Activated naive CD4-positive, alpha-beta T cell treated with anti-CD3 and anti-CD28 coated beads for 36 hours (primary cell): ENCODE measurements at regions of chr5 and their contacts with region 1.

Region 1: DNA sequence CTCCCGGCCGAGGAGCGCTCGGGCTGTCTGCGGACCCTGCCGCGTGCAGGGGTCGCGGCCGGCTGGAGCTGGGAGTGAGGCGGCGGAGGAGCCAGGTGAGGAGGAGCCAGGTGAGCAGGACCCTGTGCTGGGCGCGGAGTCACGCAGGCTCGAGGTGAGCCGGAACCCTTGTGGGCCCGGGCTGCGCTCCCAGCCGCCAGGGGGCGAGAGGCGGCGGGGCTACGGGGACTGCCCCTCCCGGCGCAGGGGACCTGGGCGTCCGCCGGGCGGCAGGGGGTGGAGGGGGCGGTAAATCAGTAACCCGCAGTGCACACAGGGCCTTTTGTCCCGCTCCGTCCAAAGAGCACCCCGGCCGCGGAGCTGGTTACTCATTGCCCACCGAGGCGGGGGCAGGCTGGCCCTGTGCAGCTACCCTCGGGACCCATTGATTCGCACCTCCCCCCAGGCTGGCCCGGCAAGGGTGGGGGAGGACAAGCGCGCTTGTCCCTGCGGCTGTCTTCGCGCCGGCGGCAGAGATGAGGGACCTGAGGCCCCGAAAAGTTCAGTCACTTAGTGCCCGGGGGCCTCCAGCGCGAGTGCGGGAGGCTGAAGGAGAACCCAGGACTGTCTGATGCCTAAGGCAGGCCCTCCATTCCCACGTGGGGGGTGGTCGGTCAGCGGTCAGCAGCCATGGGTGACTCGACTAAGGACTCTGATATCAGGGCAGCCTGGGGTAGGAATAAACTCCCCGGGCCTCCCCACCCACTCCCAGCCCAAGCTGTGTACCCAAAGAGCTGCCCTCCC is 400 bp downstream of the FGFR4 start:
- DNase-seq: peak; percentile 63
- H3K4me3 Mint-ChIP-seq: peak overlapping the region; percentile 33
- H3K27ac Mint-ChIP-seq: no peak overlapping the region
- H3K4me1 Mint-ChIP-seq: peaks cover 4% of the 10 kb centered on the region
- H3K27me3 Mint-ChIP-seq: peaks cover 5% of the 10 kb centered on the region

Region 2: GRCh38 chr5:177006265-177006972 is 80.7 kb before region 1 on chr5 and contains the start of gene UIMC1:
- CTCF ChIA-PET with region 1: no interaction called
- intact Hi-C with region 1: no loop called
- DNase-seq: peak; percentile 90
- H3K4me3 Mint-ChIP-seq: peak within 1 kb of the TSS; percentile 93
- H3K27ac Mint-ChIP-seq: peak within 1 kb of the TSS; percentile 93
- H3K4me1 Mint-ChIP-seq: peaks cover 29% of the 10 kb centered on the region
- H3K27me3 Mint-ChIP-seq: no peaks in the 10 kb centered on the region
- total RNA-seq, gene UIMC1: 53.4 to 54.6 TPM

Region 3: DNA sequence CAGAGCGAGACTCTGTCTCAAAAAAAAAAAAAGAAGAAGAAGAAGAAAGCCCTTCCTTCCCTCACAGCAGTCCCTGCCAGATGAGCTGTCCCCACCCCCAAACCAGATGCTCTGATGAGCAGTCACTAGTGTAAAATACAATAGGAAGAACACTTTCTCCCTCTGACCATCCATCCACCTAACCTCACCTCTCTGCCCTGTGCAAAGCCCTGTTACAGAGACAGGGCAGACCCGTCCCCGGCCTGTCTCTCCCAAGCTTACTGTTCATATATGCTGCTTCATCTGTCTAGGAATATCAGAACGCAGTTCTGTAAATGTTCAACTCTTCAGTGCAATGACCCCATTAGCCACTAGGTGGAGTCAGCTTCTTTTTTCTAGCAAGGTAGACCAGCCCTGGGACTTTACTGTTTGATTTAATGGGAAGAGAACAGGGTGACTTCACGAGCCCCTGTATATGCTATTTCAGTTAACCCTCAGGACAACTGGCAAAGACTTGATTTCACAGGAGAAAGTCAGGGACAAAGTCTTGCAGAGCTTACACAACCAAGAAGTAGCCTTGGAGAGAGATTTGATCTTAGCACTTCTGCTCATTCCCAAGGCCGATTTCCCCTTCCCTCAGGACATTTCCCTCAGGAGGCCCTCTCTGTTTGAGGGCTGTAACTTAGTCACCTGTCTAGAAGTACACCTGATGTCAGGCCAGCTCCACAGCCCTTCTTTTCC is 15.3 kb before region 1 on chr5:
- CTCF ChIA-PET with region 1: interaction called, 46 read pairs
- intact Hi-C with region 1: no loop called
- DNase-seq: peak; percentile 87
- H3K4me3 Mint-ChIP-seq: no peak overlapping the region
- H3K27ac Mint-ChIP-seq: no peak overlapping the region
- H3K4me1 Mint-ChIP-seq: peaks cover 3% of the 10 kb centered on the region
- H3K27me3 Mint-ChIP-seq: no peaks in the 10 kb centered on the region